Naive thymus-derived CD4-positive, alpha-beta T cell (primary cell): ENCODE measurements at regions of chr11 and their contacts with region 1.

Region 1: DNA sequence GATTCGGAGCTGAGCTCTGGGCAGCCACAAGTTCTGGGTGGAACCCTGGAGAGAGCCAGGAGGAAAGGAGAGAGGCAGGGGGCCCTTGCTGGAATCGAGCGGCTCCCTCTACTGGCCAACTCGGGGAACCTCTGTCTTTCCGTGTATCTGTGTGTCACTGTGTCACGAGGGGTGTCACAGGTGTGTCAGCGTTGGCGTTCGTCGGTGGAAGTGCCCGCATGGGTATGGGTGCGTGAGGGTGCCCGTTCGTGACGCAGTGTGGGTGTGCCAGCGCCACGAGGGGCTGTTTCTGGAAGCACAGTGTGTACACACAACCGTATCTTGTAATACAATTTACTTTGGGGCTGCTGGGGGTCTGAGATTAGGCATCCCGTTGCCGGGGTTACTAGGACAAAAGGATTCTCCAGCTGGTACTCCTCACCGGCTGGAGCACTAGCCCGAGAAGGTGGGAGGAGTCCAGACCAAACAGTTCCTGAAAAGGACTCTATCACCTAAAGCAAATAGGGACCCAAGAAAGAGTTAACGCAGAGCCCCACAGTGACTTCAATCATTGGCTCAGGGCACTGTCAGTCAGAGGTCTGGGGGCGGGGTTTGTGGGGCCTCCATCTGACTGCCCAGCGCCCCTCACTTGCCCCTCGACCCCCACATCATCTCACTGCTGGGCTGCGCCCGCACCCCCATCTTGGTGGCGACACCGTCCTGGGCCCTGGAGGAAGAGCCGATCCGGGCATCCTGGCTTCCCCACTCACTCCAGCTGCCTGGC is 2.6 kb upstream of the BCL9L start:
- DNase-seq: peak; percentile 89 to 99 (median 97)
- ATAC-seq: peak; percentile 79
- H3K4me3 ChIP-seq: peak overlapping the region; percentile 81
- H3K4me3 Mint-ChIP-seq: peak overlapping the region; percentile 86 to 98 (median 95)
- H3K27ac ChIP-seq: peak overlapping the region; percentile 96
- H3K27ac Mint-ChIP-seq: peak overlapping the region; percentile 93 to 100 (median 99)
- H3K4me1 ChIP-seq: peaks cover 25 to 34% of the 10 kb centered on the region in 2 donors
- H3K4me1 Mint-ChIP-seq: peaks cover 30 to 56% (median 46%) of the 10 kb centered on the region in 7 donors
- H3K27me3 ChIP-seq: no peaks in the 10 kb centered on the region
- H3K27me3 Mint-ChIP-seq: peaks cover 0 to 2% (median 0%) of the 10 kb centered on the region in 5 donors

Region 2: DNA sequence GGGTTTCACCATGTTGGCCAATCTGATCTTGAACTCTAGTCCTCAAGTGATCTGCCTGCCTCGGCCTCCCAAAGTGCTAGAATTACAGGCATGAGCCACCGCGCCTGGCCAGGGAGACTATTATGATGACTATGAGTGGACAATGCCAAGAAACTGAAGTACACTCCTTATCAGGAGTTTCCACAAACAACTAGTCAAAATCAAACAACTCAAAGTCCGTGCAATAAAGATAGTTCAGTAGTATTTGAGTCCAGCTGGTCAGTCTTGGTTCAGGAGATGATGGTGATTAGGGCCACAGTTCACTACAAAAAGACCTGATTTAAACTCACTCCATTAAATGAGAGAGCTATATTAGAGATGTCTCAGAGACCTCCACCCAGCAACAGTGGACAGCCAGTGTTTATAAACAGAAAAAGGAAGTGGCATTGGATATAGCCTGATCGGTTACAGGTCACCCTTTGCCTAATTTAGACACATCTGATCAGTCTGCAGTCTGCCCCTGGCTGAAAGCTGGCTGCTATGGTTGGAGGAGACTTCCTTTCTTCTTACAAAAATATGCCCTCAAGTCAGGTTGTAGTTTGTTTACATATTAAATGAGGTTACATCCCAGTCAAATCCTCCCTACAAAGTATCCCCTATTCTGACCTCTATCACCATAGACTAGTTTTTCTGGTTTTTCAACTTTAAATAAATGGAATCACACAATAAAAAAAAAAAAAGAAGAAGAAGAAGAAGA is 606.7 kb before region 1 on chr11:
- CTCF ChIA-PET with region 1: no interaction called
- POLR2A ChIA-PET with region 1: no interaction called
- intact Hi-C with region 1: no loop called
- DNase-seq: no peak
- ATAC-seq: no peak
- H3K4me3 ChIP-seq: no peak overlapping the region
- H3K4me3 Mint-ChIP-seq: peak overlapping the region in 8 of 10 donors; percentile 13 to 87 (median 53)
- H3K27ac ChIP-seq: no peak overlapping the region
- H3K27ac Mint-ChIP-seq: peak overlapping the region; percentile 60 to 100 (median 80)
- H3K4me1 ChIP-seq: peaks cover 34 to 63% of the 10 kb centered on the region in 2 donors
- H3K4me1 Mint-ChIP-seq: peaks cover 43 to 90% (median 78%) of the 10 kb centered on the region in 7 donors
- H3K27me3 ChIP-seq: no peaks in the 10 kb centered on the region
- H3K27me3 Mint-ChIP-seq: no peaks in the 10 kb centered on the region

Region 3: GRCh38 chr11:118572061-118572980 is 356.0 kb before region 1 on chr11 and contains the start of gene ARCN1:
- CTCF ChIA-PET with region 1: no interaction called
- POLR2A ChIA-PET with region 1: no interaction called
- intact Hi-C with region 1: loop called in 1 of 2 experiments (anchors 5 kb)
- DNase-seq: peak; percentile 58 to 82 (median 79)
- ATAC-seq: peak; percentile 94
- H3K4me3 ChIP-seq: peak within 1 kb of the TSS; percentile 98
- H3K4me3 Mint-ChIP-seq: peak within 1 kb of the TSS; percentile 83 to 99 (median 96)
- H3K27ac ChIP-seq: peak within 1 kb of the TSS; percentile 100
- H3K27ac Mint-ChIP-seq: peak within 1 kb of the TSS; percentile 92 to 98 (median 98)
- H3K4me1 ChIP-seq: peaks cover 26 to 36% of the 10 kb centered on the region in 2 donors
- H3K4me1 Mint-ChIP-seq: peaks cover 35 to 58% (median 50%) of the 10 kb centered on the region in 7 donors
- H3K27me3 ChIP-seq: no peaks in the 10 kb centered on the region
- H3K27me3 Mint-ChIP-seq: no peaks in the 10 kb centered on the region
- total RNA-seq, gene ARCN1: 71.2 to 134 (median 115) TPM

Region 4: DNA sequence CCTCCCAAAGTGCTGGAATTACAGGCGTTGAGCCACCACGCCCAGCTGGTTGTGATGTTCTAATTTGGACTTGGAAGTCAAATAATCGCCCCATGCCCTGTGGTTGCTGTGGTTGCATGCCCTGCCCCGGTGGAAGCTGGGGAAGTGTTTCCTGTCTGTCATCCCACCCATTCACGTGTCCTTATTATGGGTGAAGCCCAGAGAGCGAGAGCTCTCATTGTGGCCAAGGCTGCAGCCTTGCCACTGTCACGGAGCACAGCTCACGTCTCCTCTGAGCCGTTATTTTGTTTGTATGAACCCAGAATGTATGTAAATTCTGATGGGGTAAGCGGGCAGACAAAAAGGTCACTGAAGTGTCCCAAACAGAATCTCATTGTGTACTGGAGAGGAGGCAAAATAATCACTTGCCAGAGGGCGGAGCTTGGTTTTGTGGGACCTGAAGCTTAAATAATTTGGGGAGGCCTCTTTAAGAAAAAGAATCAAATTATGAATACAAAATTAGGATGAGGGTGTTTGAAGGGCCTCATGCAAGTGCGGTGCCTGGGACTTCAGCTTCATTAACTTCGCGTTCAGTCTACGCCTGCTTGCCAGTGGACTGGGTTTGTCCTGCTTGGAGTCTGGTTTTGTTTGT is 223.1 kb before region 1 on chr11:
- CTCF ChIA-PET with region 1: no interaction called
- POLR2A ChIA-PET with region 1: interaction called, 12 read pairs
- intact Hi-C with region 1: no loop called
- DNase-seq: peak in 7 of 9 donors; percentile 50 to 72 (median 63)
- ATAC-seq: peak; percentile 79
- H3K4me3 ChIP-seq: no peak overlapping the region
- H3K4me3 Mint-ChIP-seq: peak overlapping the region; percentile 67 to 84 (median 76)
- H3K27ac ChIP-seq: peak overlapping the region; percentile 62
- H3K27ac Mint-ChIP-seq: peak overlapping the region; percentile 49 to 99 (median 95)
- H3K4me1 ChIP-seq: peaks cover 28 to 41% of the 10 kb centered on the region in 2 donors
- H3K4me1 Mint-ChIP-seq: peaks cover 20 to 63% (median 47%) of the 10 kb centered on the region in 7 donors
- H3K27me3 ChIP-seq: no peaks in the 10 kb centered on the region
- H3K27me3 Mint-ChIP-seq: peaks cover 0 to 8% (median 0%) of the 10 kb centered on the region in 5 donors

Region 5: DNA sequence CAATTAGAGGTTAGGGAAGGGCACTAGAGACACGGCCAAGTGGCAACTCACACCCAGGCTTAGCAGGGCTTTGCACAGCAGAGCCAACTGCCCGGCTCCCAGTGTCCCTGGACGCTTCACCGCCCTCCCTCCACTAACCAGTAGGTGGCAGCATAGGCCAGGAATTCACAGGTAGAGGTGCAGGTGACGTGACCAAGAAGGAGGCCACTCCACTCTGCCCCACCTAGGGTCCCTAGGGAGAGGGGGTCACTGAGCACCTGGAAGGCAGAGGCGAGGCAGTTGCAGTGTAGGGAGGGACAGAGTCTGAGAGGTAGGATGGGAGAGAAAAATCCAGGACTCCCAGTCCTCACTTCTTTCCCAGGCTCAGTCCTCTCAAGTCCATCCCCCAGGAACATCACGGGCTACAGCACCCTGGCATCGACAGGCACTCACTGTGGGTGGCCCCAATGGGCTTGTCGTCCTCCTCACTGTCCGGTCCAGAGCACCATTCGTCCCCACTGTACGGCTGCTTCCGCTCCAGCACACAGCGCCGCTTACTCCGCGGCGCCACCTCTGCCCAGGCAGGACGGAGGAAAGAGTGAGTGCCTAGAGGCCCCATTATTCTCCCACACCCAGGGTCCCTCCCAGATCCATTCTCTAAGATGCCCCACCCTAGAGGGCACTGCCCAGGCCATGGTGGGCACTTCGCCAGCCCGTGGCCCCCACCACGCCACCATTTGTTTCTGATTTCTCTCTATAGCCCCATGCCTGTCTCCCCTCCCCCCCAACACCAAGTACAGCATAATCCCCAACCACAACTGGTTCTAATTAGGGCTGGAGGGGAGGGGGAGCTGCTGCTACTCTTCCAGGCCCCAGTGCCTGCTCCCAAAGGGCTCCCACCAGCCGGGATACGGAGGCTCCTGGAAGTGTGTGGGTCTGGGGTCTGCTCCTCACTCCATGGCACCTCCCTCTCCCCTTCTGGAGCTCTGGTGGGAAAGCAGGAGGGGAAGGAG is 20.9 kb before region 1 on chr11:
- CTCF ChIA-PET with region 1: no interaction called
- POLR2A ChIA-PET with region 1: interaction called, 3 read pairs
- intact Hi-C with region 1: loop called (anchors 1 kb)
- DNase-seq: peak; percentile 73 to 91 (median 82)
- ATAC-seq: peak; percentile 83
- H3K4me3 ChIP-seq: no peak overlapping the region
- H3K4me3 Mint-ChIP-seq: peak overlapping the region in 9 of 10 donors; percentile 15 to 99 (median 56)
- H3K27ac ChIP-seq: peak overlapping the region; percentile 96
- H3K27ac Mint-ChIP-seq: peak overlapping the region; percentile 80 to 96 (median 93)
- H3K4me1 ChIP-seq: peaks cover 28 to 50% of the 10 kb centered on the region in 2 donors
- H3K4me1 Mint-ChIP-seq: peaks cover 30 to 53% (median 46%) of the 10 kb centered on the region in 7 donors
- H3K27me3 ChIP-seq: no peaks in the 10 kb centered on the region
- H3K27me3 Mint-ChIP-seq: no peaks in the 10 kb centered on the region

Region 6: DNA sequence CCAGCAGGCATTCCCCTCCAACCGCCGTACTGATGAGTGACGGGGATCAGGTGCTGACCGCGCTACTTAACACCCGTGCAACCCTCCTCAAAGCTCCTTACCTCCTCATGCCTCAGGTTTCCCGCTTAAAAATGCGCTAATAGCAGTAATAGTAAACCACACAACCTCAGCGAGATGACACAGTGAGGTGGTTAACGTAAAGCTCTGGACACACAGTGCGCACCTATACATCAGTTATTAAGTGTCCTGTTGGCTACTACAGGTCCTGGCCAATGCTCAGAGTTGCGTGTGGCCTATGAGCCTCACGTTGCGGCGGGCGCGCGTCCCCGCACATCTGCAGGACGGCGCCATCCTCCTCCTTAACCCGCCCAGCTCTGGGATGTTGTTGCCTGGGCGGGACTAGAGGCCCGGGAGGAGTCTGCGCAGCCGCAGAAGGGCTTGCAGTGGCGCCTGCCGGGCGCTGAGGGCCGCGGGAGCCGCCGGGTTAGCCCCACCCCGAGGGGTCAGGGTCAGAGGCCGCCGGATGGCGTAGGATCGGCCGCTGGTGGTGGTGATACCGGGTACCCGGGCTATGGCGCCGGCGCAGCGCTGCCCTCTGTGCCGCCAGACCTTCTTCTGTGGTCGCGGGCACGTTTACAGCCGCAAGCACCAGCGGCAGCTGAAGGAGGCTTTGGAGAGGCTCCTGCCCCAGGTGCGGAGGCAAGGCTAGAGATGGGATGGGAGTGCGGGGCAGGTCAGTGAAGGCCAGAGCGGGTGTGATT is 69.5 kb after region 1 on chr11 and contains the start of gene CENATAC:
- CTCF ChIA-PET with region 1: no interaction called
- POLR2A ChIA-PET with region 1: no interaction called
- intact Hi-C with region 1: loop called (anchors 1 to 5 kb)
- DNase-seq: peak; percentile 91 to 98 (median 94)
- ATAC-seq: peak; percentile 98
- H3K4me3 ChIP-seq: peak within 1 kb of the TSS; percentile 91
- H3K4me3 Mint-ChIP-seq: peak within 1 kb of the TSS; percentile 87 to 99 (median 94)
- H3K27ac ChIP-seq: peak within 1 kb of the TSS; percentile 85
- H3K27ac Mint-ChIP-seq: peak within 1 kb of the TSS; percentile 87 to 98 (median 92)
- H3K4me1 ChIP-seq: peaks cover 6 to 16% of the 10 kb centered on the region in 2 donors
- H3K4me1 Mint-ChIP-seq: peaks cover 26 to 45% (median 37%) of the 10 kb centered on the region in 7 donors
- H3K27me3 ChIP-seq: no peaks in the 10 kb centered on the region
- H3K27me3 Mint-ChIP-seq: no peaks in the 10 kb centered on the region
- total RNA-seq, gene CENATAC: 53.5 to 136 (median 109) TPM

Region 7: GRCh38 chr11:119101759-119102423 is 173.6 kb after region 1 on chr11 and contains the start of gene DPAGT1:
- CTCF ChIA-PET with region 1: interaction called, 3 read pairs
- POLR2A ChIA-PET with region 1: interaction called, 4 read pairs
- intact Hi-C with region 1: loop called (anchors 2 to 5 kb)
- DNase-seq: peak; percentile 68 to 90 (median 86)
- ATAC-seq: peak; percentile 90
- H3K4me3 ChIP-seq: peak within 1 kb of the TSS; percentile 79
- H3K4me3 Mint-ChIP-seq: peak within 1 kb of the TSS; percentile 91 to 100 (median 96)
- H3K27ac ChIP-seq: peak within 1 kb of the TSS; percentile 95
- H3K27ac Mint-ChIP-seq: peak within 1 kb of the TSS; percentile 98 to 100 (median 99)
- H3K4me1 ChIP-seq: peaks cover 21 to 26% of the 10 kb centered on the region in 2 donors
- H3K4me1 Mint-ChIP-seq: peaks cover 24 to 64% (median 50%) of the 10 kb centered on the region in 7 donors
- H3K27me3 ChIP-seq: no peaks in the 10 kb centered on the region
- H3K27me3 Mint-ChIP-seq: no peaks in the 10 kb centered on the region
- total RNA-seq, gene DPAGT1: 21.9 to 63.9 (median 37.9) TPM